ENCODE measurements at regions of chr9 and their contacts with region 1.

Region 1: GRCh38 chr9:77977210-77977611 is 54.4 kb downstream of the GNAQ start:
- DNase-seq: peak in 1 of 2 experiments; percentile 19
- H3K4me3 ChIP-seq: no peak overlapping the region
- H3K4me3 Mint-ChIP-seq: no peak overlapping the region
- H3K27ac Mint-ChIP-seq: no peak overlapping the region
- H3K4me1 ChIP-seq: no peaks in the 10 kb centered on the region
- H3K4me1 Mint-ChIP-seq: no peaks in the 10 kb centered on the region
- H3K27me3 ChIP-seq: no peaks in the 10 kb centered on the region
- H3K27me3 Mint-ChIP-seq: no peaks in the 10 kb centered on the region
- CTCF ChIP-seq: no peak

Region 2: DNA sequence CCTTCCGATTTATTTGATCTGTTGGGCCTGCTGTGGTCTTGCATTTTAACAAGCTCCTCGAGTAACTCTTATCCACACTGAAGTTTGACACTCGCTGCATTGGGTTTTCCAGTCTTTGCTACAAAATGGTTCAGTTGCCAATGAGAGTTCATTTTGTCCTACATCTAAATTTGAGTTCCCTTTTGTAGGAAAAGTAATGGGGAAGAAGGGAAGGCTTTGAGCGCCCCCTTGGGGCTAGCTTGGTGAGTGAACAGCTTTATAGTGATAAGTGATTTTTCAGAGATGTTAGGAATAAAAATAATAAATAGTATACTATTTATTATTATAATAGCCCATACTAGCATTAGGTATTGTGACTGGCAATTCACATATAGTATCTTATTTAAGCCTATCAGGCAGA is 144.3 kb after region 1 on chr9:
- CTCF ChIA-PET with region 1: no interaction called
- POLR2A ChIA-PET with region 1: no interaction called
- intact Hi-C with region 1: loop called (anchors 1 kb)
- DNase-seq: peak in 1 of 2 experiments; percentile 11
- H3K4me3 ChIP-seq: no peak overlapping the region
- H3K4me3 Mint-ChIP-seq: no peak overlapping the region
- H3K27ac Mint-ChIP-seq: no peak overlapping the region
- H3K4me1 ChIP-seq: no peaks in the 10 kb centered on the region
- H3K4me1 Mint-ChIP-seq: no peaks in the 10 kb centered on the region
- H3K27me3 ChIP-seq: no peaks in the 10 kb centered on the region
- H3K27me3 Mint-ChIP-seq: no peaks in the 10 kb centered on the region
- CTCF ChIP-seq: peak in 1 of 2 experiments; percentile 25

Region 3: DNA sequence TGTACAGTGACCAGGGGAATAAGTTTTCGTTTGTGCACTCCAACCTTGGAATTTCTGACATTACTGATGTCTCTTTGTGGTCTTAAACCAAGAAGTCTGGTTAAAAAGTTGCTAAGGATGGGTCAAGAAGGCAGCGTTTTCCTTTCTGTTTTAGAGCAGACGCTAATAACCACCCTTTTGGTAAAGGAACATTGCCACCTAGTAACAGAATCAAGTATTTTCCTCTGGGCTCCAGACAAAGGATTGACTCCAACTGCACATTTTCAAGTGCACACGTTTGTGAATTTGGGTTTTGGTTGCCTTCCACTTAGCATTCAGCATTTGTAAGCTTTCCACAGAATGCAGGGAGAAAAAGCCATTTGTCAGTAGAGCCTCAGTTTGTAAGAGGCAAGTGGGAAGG is 236.5 kb after region 1 on chr9:
- CTCF ChIA-PET with region 1: no interaction called
- POLR2A ChIA-PET with region 1: no interaction called
- intact Hi-C with region 1: loop called (anchors 1 kb)
- DNase-seq: no peak
- H3K4me3 ChIP-seq: no peak overlapping the region
- H3K4me3 Mint-ChIP-seq: no peak overlapping the region
- H3K27ac Mint-ChIP-seq: no peak overlapping the region
- H3K4me1 ChIP-seq: no peaks in the 10 kb centered on the region
- H3K4me1 Mint-ChIP-seq: no peaks in the 10 kb centered on the region
- H3K27me3 ChIP-seq: no peaks in the 10 kb centered on the region
- H3K27me3 Mint-ChIP-seq: no peaks in the 10 kb centered on the region
- CTCF ChIP-seq: no peak